Upper lobe of right lung (tissue), 1 donor: ENCODE measurements at regions of chr3 and their contacts with region 1.

Region 1: DNA sequence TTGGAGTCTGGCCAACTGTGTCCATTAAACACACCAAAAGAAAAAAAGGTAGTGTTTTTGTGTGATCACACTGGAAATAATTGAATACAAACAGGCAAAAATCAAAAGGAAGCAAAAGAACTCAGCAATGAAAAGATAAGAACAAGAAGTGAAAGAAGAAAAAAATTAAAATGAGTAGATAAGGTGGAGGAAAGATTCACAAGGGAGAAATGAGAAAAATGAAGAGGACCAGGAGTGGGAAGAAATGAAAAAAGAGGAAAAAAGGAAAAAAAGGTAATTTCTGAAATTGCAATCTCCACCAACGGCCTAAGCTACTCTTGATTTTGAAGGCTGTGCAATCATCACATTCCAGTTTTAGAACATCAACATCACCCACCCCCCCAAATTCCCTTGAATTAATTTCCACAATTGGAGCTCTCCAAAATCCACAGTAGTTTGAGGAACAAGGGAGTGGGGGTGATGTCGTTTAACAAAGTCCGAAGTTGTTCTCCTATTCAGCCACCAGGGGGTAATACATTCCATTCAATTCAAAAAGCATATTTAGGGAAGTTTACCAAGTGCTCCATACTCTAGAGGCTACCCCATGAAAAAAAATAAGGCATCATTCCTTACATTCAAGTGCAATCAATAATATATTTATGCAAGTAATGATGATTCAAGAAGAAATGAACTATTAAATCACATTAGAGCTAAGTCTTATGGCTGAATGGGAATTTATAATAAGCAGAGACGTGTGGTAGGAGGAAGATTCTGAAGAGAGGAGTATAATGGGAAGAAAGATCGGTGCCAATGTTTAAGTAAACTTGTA is 37.4 kb downstream of the ZNF860 start:
- DNase-seq: no peak
- ATAC-seq: peak; percentile 94
- H3K4me3 ChIP-seq: no peak overlapping the region
- H3K27ac ChIP-seq: no peak overlapping the region
- H3K4me1 ChIP-seq: peaks cover 3% of the 10 kb centered on the region
- H3K27me3 ChIP-seq: no peaks in the 10 kb centered on the region
- CTCF ChIP-seq: peak; percentile 82

Region 2: GRCh38 chr3:31185062-31185357 is 834.0 kb before region 1 on chr3:
- intact Hi-C with region 1: no loop called
- DNase-seq: no peak
- ATAC-seq: no peak
- H3K4me3 ChIP-seq: no peak overlapping the region
- H3K27ac ChIP-seq: no peak overlapping the region
- H3K4me1 ChIP-seq: no peaks in the 10 kb centered on the region
- H3K27me3 ChIP-seq: no peaks in the 10 kb centered on the region
- CTCF ChIP-seq: no peak

Region 3: GRCh38 chr3:32147933-32148332 is 129.0 kb after region 1 on chr3:
- intact Hi-C with region 1: loop called (anchors 5 kb)
- DNase-seq: no peak
- ATAC-seq: no peak
- H3K4me3 ChIP-seq: no peak overlapping the region
- H3K27ac ChIP-seq: no peak overlapping the region
- H3K4me1 ChIP-seq: no peaks in the 10 kb centered on the region
- H3K27me3 ChIP-seq: no peaks in the 10 kb centered on the region
- CTCF ChIP-seq: no peak